Stomach (tissue), 19 donors: ENCODE measurements at regions of chr1 and their contacts with region 1.

Region 1: DNA sequence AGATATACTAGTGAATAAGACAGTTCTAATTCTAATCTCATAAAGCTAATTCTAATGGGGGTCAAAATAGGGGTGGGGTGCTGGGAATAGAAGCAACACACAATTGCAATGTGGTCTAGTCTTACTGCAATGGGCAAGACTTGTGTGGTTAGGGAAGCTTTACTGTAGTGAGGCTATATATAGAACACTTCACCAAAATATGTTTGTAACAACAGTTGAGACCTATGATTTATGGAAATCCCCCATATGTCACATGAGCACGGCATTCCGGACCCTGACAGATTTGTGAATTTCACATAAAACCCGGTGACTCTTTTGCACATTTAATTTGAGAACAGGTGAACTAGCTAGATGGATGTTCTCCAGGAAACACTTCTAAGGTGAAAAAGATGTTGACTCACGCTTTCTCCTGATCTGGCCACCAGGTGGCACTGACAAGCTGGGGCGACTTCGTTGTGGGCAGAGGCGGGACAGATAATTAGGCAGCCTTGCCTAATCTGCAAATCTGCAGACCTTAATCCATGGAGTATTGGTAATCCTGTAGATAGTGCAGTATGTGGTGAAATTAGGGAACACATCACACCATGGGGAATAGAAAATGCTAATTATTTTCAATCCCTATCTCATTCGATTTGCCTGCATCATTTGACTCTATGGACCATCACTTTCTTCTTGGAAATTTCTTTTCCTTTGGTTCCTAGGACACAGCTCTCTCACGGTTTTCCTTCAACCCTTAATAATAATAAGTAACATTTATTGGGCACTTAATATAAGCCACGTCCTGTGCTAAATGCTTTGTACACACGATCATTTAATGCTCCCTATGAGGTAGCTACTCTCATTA is 37.7 kb downstream of the KIAA0040 start:
- DNase-seq: peak; percentile 82 to 84
- H3K4me3 ChIP-seq: no peak overlapping the region
- H3K27ac ChIP-seq: no peak overlapping the region
- H3K4me1 ChIP-seq: peaks cover 0 to 21% (median 11%) of the 10 kb centered on the region in 4 donors
- H3K27me3 ChIP-seq: peaks cover 0 to 10% (median 0%) of the 10 kb centered on the region in 3 donors
- CTCF ChIP-seq: peak in 5 of 7 experiments; percentile 80 to 95 (median 88)
- EP300 ChIP-seq: no peak
- POLR2A ChIP-seq: no peak

Region 2: GRCh38 chr1:174883409-174883808 is 271.4 kb before region 1 on chr1:
- intact Hi-C with region 1: no loop called
- DNase-seq: peak in 1 of 2 donors; percentile 27
- H3K4me3 ChIP-seq: no peak overlapping the region
- H3K27ac ChIP-seq: peak overlapping the region in 2 of 5 donors; percentile 29 to 45
- H3K4me1 ChIP-seq: peaks cover 5 to 45% (median 19%) of the 10 kb centered on the region in 4 donors
- H3K27me3 ChIP-seq: no peaks in the 10 kb centered on the region
- CTCF ChIP-seq: no peak
- EP300 ChIP-seq: no peak
- POLR2A ChIP-seq: no peak

Region 3: GRCh38 chr1:175250027-175250426 is 95.2 kb after region 1 on chr1:
- intact Hi-C with region 1: no loop called
- DNase-seq: no peak
- H3K4me3 ChIP-seq: no peak overlapping the region
- H3K27ac ChIP-seq: peak overlapping the region in 2 of 5 donors; percentile 11 to 39
- H3K4me1 ChIP-seq: no peaks in the 10 kb centered on the region
- H3K27me3 ChIP-seq: no peaks in the 10 kb centered on the region
- CTCF ChIP-seq: no peak
- EP300 ChIP-seq: no peak
- POLR2A ChIP-seq: no peak

Region 4: DNA sequence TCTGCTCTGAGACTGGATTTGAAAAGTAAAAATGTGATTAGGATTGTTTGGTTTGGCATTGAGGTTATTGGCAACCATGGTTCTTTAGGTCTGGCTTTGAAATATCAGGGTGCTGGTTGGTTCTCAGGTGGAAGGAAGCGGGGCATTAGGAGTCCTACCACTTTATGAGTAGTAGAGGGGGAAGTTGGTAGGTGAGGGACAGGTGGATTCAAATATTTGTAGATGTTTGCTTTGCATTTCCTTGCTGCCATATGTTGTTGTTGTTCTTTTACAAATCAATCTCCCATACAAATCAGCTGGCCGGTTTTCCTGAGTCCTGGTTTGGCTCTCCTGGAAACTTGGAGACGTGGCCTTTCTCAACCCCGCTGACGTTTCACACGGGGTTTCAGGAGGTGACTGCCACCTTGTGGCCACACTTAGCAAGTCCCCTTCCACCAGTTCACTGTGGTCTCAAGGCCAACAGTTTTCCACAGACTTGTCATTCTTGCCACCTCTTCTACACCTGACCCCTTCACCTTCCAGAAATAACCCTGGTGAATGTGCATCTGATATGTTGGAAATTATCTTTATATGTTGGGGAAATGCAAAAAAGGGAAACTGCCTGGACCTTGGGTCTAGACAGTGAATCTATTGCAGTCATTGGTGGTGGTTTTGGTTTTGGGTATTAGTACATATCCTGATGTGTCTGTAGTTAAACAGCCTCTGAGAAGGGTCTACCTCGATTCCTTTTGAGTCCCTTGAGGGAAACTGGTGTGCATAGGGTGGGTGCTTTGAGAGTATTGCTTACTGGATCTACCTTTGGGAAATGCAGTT is 164.8 kb after region 1 on chr1:
- intact Hi-C with region 1: loop called (anchors 2 kb)
- DNase-seq: peak; percentile 84 to 90
- H3K4me3 ChIP-seq: no peak overlapping the region
- H3K27ac ChIP-seq: peak overlapping the region; percentile 60 to 79 (median 69)
- H3K4me1 ChIP-seq: peaks cover 16 to 23% (median 23%) of the 10 kb centered on the region in 4 donors
- H3K27me3 ChIP-seq: no peaks in the 10 kb centered on the region
- CTCF ChIP-seq: peak in 5 of 7 experiments; percentile 69 to 96 (median 88)
- EP300 ChIP-seq: no peak
- POLR2A ChIP-seq: no peak